ENCODE measurements at regions of chr12 and their contacts with region 1.

Region 1: GRCh38 chr12:57111031-57111734 is at the start of gene STAT6:
- DNase-seq: peak; percentile 87 to 96 (median 90)
- H3K4me3 ChIP-seq: peak within 1 kb of the TSS; percentile 90 to 99
- H3K4me3 Mint-ChIP-seq: peak within 1 kb of the TSS; percentile 93 to 100 (median 96)
- H3K27ac ChIP-seq: peak within 1 kb of the TSS; percentile 93
- H3K27ac Mint-ChIP-seq: peak within 1 kb of the TSS; percentile 94 to 100 (median 98)
- H3K4me1 ChIP-seq: peaks cover 34% of the 10 kb centered on the region
- H3K4me1 Mint-ChIP-seq: peaks cover 28 to 64% (median 38%) of the 10 kb centered on the region in 4 donors
- H3K27me3 ChIP-seq: no peaks in the 10 kb centered on the region
- H3K27me3 Mint-ChIP-seq: peaks cover 0 to 4% of the 10 kb centered on the region in 2 donors
- total RNA-seq, gene STAT6: 399 to 424 TPM

Region 2: GRCh38 chr12:56630160-56630632 is 481.0 kb before region 1 on chr12 and contains the start of gene BAZ2A:
- CTCF ChIA-PET with region 1: interaction called, 4 read pairs
- POLR2A ChIA-PET with region 1: interaction called, 15 read pairs
- intact Hi-C with region 1: no loop called
- DNase-seq: peak; percentile 80 to 86 (median 83)
- H3K4me3 ChIP-seq: peak within 1 kb of the TSS; percentile 90 to 98
- H3K4me3 Mint-ChIP-seq: peak within 1 kb of the TSS; percentile 86 to 99 (median 92)
- H3K27ac ChIP-seq: peak within 1 kb of the TSS; percentile 93
- H3K27ac Mint-ChIP-seq: peak within 1 kb of the TSS; percentile 82 to 98 (median 94)
- H3K4me1 ChIP-seq: peaks cover 76% of the 10 kb centered on the region
- H3K4me1 Mint-ChIP-seq: peaks cover 43 to 81% (median 63%) of the 10 kb centered on the region in 4 donors
- H3K27me3 ChIP-seq: no peaks in the 10 kb centered on the region
- H3K27me3 Mint-ChIP-seq: no peaks in the 10 kb centered on the region
- total RNA-seq, gene BAZ2A: 206 to 212 TPM

Region 3: GRCh38 chr12:56724972-56725722 is 386.0 kb before region 1 on chr12 and contains the start of gene NACA:
- CTCF ChIA-PET with region 1: interaction called, 3 read pairs
- POLR2A ChIA-PET with region 1: interaction called, 26 read pairs
- intact Hi-C with region 1: no loop called
- DNase-seq: peak; percentile 94 to 100 (median 98)
- H3K4me3 ChIP-seq: peak within 1 kb of the TSS; percentile 90 to 100
- H3K4me3 Mint-ChIP-seq: peak within 1 kb of the TSS; percentile 90 to 99 (median 98)
- H3K27ac ChIP-seq: peak within 1 kb of the TSS; percentile 90
- H3K27ac Mint-ChIP-seq: peak within 1 kb of the TSS; percentile 92 to 99 (median 97)
- H3K4me1 ChIP-seq: peaks cover 54% of the 10 kb centered on the region
- H3K4me1 Mint-ChIP-seq: peaks cover 41 to 66% (median 51%) of the 10 kb centered on the region in 4 donors
- H3K27me3 ChIP-seq: no peaks in the 10 kb centered on the region
- H3K27me3 Mint-ChIP-seq: no peaks in the 10 kb centered on the region
- total RNA-seq, gene NACA: 1,184 to 1,255 TPM

Region 4: GRCh38 chr12:57063991-57064685 is 47.0 kb before region 1 on chr12:
- CTCF ChIA-PET with region 1: interaction called, 458 read pairs
- POLR2A ChIA-PET with region 1: interaction called, 373 read pairs
- intact Hi-C with region 1: loop called (anchors 1 kb)
- DNase-seq: peak; percentile 77 to 88 (median 84)
- H3K4me3 ChIP-seq: peak overlapping the region; percentile 5 to 24
- H3K4me3 Mint-ChIP-seq: peak overlapping the region; percentile 73 to 85 (median 82)
- H3K27ac ChIP-seq: peak overlapping the region; percentile 74
- H3K27ac Mint-ChIP-seq: peak overlapping the region; percentile 79 to 99 (median 96)
- H3K4me1 ChIP-seq: peaks cover 30% of the 10 kb centered on the region
- H3K4me1 Mint-ChIP-seq: peaks cover 15 to 33% (median 20%) of the 10 kb centered on the region in 4 donors
- H3K27me3 ChIP-seq: no peaks in the 10 kb centered on the region
- H3K27me3 Mint-ChIP-seq: no peaks in the 10 kb centered on the region

Region 5: GRCh38 chr12:57088459-57089248 is 22.5 kb before region 1 on chr12 and contains the start of gene NAB2:
- CTCF ChIA-PET with region 1: interaction called, 109 read pairs
- POLR2A ChIA-PET with region 1: interaction called, 622 read pairs
- intact Hi-C with region 1: loop called (anchors 1 kb)
- DNase-seq: peak; percentile 89 to 94 (median 92)
- H3K4me3 ChIP-seq: peak within 1 kb of the TSS; percentile 90 to 91
- H3K4me3 Mint-ChIP-seq: peak within 1 kb of the TSS; percentile 92 to 98 (median 95)
- H3K27ac ChIP-seq: peak within 1 kb of the TSS; percentile 97
- H3K27ac Mint-ChIP-seq: peak within 1 kb of the TSS; percentile 97 to 99 (median 98)
- H3K4me1 ChIP-seq: peaks cover 52% of the 10 kb centered on the region
- H3K4me1 Mint-ChIP-seq: peaks cover 40 to 78% (median 53%) of the 10 kb centered on the region in 4 donors
- H3K27me3 ChIP-seq: no peaks in the 10 kb centered on the region
- H3K27me3 Mint-ChIP-seq: no peaks in the 10 kb centered on the region
- total RNA-seq, gene NAB2: 17.5 to 19.5 TPM

Region 6: GRCh38 chr12:57162160-57163125 is 51.3 kb after region 1 on chr12:
- CTCF ChIA-PET with region 1: no interaction called
- POLR2A ChIA-PET with region 1: no interaction called
- intact Hi-C with region 1: no loop called
- DNase-seq: no peak
- H3K4me3 ChIP-seq: no peak overlapping the region
- H3K4me3 Mint-ChIP-seq: no peak overlapping the region
- H3K27ac ChIP-seq: no peak overlapping the region
- H3K27ac Mint-ChIP-seq: no peak overlapping the region
- H3K4me1 ChIP-seq: no peaks in the 10 kb centered on the region
- H3K4me1 Mint-ChIP-seq: peaks cover 4 to 8% (median 5%) of the 10 kb centered on the region in 4 donors
- H3K27me3 ChIP-seq: no peaks in the 10 kb centered on the region
- H3K27me3 Mint-ChIP-seq: no peaks in the 10 kb centered on the region

Region 7: DNA sequence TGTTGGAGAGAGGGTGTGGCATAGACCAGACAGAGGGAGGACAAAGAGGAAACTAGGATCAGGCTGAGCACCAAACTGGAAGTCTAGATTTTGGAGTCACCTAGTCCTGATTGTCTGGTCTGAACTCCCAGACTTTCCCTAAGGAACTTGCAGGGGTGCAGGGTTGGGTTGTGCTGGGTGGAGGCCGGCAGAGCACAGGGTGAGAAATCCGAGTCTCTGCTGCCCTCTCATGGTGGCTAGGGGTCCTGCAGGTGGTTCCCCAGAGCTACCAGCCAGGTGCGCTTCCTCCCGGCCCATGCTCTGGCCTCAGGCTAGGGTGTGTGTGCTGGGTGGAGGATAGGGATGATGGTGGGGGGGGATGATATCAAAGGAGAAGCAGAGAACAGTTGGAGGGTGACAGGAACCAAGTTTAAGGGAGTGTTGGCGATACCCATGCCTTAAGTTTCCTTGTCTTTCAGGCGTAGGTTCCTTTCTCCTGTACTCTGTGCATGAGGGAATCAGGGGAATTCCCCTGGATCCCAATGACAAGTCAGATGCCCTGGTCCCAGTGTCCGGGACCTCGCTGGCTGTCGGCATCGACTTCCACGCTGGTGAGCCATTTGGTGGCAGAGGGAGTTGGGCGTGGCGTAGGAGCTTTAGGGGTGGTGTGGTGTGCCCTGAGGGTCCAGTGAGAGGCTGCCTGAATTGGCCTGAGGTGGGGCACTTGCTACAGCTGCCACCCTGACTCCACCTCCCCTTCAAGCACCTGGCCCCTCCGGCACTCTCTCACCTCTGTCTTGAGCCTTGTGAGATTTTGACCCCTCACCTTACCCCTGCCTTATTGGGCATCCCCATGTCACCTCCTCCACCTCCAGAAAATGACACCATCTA is 72.0 kb after region 1 on chr12:
- CTCF ChIA-PET with region 1: interaction called, 12 read pairs
- POLR2A ChIA-PET with region 1: interaction called, 5 read pairs
- intact Hi-C with region 1: no loop called
- DNase-seq: peak; percentile 71 to 75 (median 73)
- H3K4me3 ChIP-seq: no peak overlapping the region
- H3K4me3 Mint-ChIP-seq: peak overlapping the region in 1 of 8 donors; percentile 25
- H3K27ac ChIP-seq: no peak overlapping the region
- H3K27ac Mint-ChIP-seq: peak overlapping the region in 1 of 7 donors; percentile 70
- H3K4me1 ChIP-seq: no peaks in the 10 kb centered on the region
- H3K4me1 Mint-ChIP-seq: peaks cover 2 to 7% (median 5%) of the 10 kb centered on the region in 4 donors
- H3K27me3 ChIP-seq: no peaks in the 10 kb centered on the region
- H3K27me3 Mint-ChIP-seq: peaks cover 0 to 2% of the 10 kb centered on the region in 2 donors

Measured in CD4-positive, alpha-beta memory T cell (primary cell).